SK-N-SH (cell line): ENCODE measurements at regions of chr2 and their contacts with region 1.

Region 1: DNA sequence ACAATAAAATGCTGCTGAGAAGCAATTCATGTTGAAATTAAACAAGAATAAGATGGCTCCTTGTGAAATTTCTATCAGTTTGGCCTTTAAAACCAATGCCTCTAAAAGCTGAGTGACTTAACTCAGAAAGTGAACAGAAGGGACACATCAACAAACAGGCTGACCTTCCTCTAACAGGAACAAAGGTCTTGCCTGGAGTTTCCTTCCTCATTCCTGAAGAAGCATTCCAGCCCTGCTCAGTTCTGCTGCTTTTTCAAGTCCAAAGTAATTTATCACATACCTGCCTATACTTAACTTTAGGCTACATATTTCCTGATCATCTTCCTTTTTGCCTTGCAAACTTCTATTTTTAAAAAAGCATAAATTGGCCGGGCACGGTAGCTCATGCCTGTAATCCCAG is 14.1 kb downstream of the PTRHD1 start:
- DNase-seq: no peak
- H3K4me3 ChIP-seq: no peak overlapping the region
- H3K27ac ChIP-seq: no peak overlapping the region
- H3K4me1 ChIP-seq: no peaks in the 10 kb centered on the region
- H3K27me3 ChIP-seq: no peaks in the 10 kb centered on the region
- CTCF ChIP-seq: no peak
- EP300 ChIP-seq: no peak
- RAD21 ChIP-seq: no peak

Region 2: GRCh38 chr2:24429197-24430074 is 349.7 kb before region 1 on chr2:
- CTCF ChIA-PET with region 1: no interaction called
- POLR2A ChIA-PET with region 1: no interaction called
- DNase-seq: no peak
- H3K4me3 ChIP-seq: no peak overlapping the region
- H3K27ac ChIP-seq: no peak overlapping the region
- H3K4me1 ChIP-seq: peaks cover 0 to 2% of the 10 kb centered on the region in 2 experiments; a peak in 1 of 4 replicates
- H3K27me3 ChIP-seq: no peaks in the 10 kb centered on the region
- CTCF ChIP-seq: no peak
- EP300 ChIP-seq: no peak
- RAD21 ChIP-seq: no peak

Region 3: GRCh38 chr2:24766609-24767008 is 12.5 kb before region 1 on chr2:
- CTCF ChIA-PET with region 1: interaction called, 19 read pairs
- POLR2A ChIA-PET with region 1: no interaction called
- DNase-seq: no peak
- H3K4me3 ChIP-seq: no peak overlapping the region
- H3K27ac ChIP-seq: no peak overlapping the region
- H3K4me1 ChIP-seq: no peaks in the 10 kb centered on the region; a peak in 1 of 4 replicates
- H3K27me3 ChIP-seq: no peaks in the 10 kb centered on the region
- CTCF ChIP-seq: no peak
- EP300 ChIP-seq: no peak
- RAD21 ChIP-seq: no peak

Region 4: GRCh38 chr2:24886691-24887304 is 107.7 kb after region 1 on chr2:
- CTCF ChIA-PET with region 1: no interaction called
- POLR2A ChIA-PET with region 1: no interaction called
- DNase-seq: no peak
- H3K4me3 ChIP-seq: no peak overlapping the region
- H3K27ac ChIP-seq: no peak overlapping the region
- H3K4me1 ChIP-seq: no peaks in the 10 kb centered on the region; a peak in 1 of 4 replicates
- H3K27me3 ChIP-seq: no peaks in the 10 kb centered on the region
- CTCF ChIP-seq: no peak
- EP300 ChIP-seq: no peak
- RAD21 ChIP-seq: no peak

Region 5: GRCh38 chr2:24945907-24946306 is 166.8 kb after region 1 on chr2:
- CTCF ChIA-PET with region 1: no interaction called
- POLR2A ChIA-PET with region 1: no interaction called
- DNase-seq: no peak
- H3K4me3 ChIP-seq: no peak overlapping the region
- H3K27ac ChIP-seq: no peak overlapping the region
- H3K4me1 ChIP-seq: no peaks in the 10 kb centered on the region
- H3K27me3 ChIP-seq: no peaks in the 10 kb centered on the region
- CTCF ChIP-seq: no peak
- EP300 ChIP-seq: no peak
- RAD21 ChIP-seq: no peak